Naive thymus-derived CD4-positive, alpha-beta T cell (primary cell): ENCODE measurements at regions of chr22 and their contacts with region 1.

Region 1: GRCh38 chr22:30326706-30327362 is at the start of gene TBC1D10A:
- DNase-seq: peak; percentile 87 to 93 (median 92)
- ATAC-seq: peak; percentile 97
- H3K4me3 ChIP-seq: peak within 1 kb of the TSS; percentile 83
- H3K4me3 Mint-ChIP-seq: peak within 1 kb of the TSS; percentile 87 to 96 (median 93)
- H3K27ac ChIP-seq: peak within 1 kb of the TSS; percentile 78
- H3K27ac Mint-ChIP-seq: peak within 1 kb of the TSS; percentile 82 to 94 (median 90)
- H3K4me1 ChIP-seq: peaks cover 43 to 49% of the 10 kb centered on the region in 2 donors
- H3K4me1 Mint-ChIP-seq: peaks cover 37 to 55% (median 48%) of the 10 kb centered on the region in 7 donors
- H3K27me3 ChIP-seq: no peaks in the 10 kb centered on the region
- H3K27me3 Mint-ChIP-seq: no peaks in the 10 kb centered on the region
- total RNA-seq, gene TBC1D10A: 47.2 to 73.8 (median 70.9) TPM

Region 2: GRCh38 chr22:30305519-30305905 is 21.3 kb before region 1 on chr22:
- CTCF ChIA-PET with region 1: interaction called, 8 read pairs
- POLR2A ChIA-PET with region 1: interaction called, 1,265 read pairs
- intact Hi-C with region 1: loop called (anchors 1 kb)
- DNase-seq: peak in 8 of 9 donors; percentile 56 to 75 (median 68)
- ATAC-seq: peak; percentile 67
- H3K4me3 ChIP-seq: peak overlapping the region; percentile 51
- H3K4me3 Mint-ChIP-seq: peak overlapping the region; percentile 69 to 97 (median 84)
- H3K27ac ChIP-seq: peak overlapping the region; percentile 75
- H3K27ac Mint-ChIP-seq: peak overlapping the region; percentile 87 to 99 (median 97)
- H3K4me1 ChIP-seq: peaks cover 96 to 98% of the 10 kb centered on the region in 2 donors
- H3K4me1 Mint-ChIP-seq: peaks cover 82 to 100% (median 93%) of the 10 kb centered on the region in 7 donors
- H3K27me3 ChIP-seq: no peaks in the 10 kb centered on the region
- H3K27me3 Mint-ChIP-seq: no peaks in the 10 kb centered on the region

Region 3: GRCh38 chr22:30314915-30315314 is 11.9 kb before region 1 on chr22:
- CTCF ChIA-PET with region 1: interaction called, 5 read pairs
- POLR2A ChIA-PET with region 1: interaction called, 1,265 read pairs
- intact Hi-C with region 1: loop called in 1 of 2 experiments (anchors 1 kb)
- DNase-seq: peak in 2 of 9 donors; percentile 40 to 56
- ATAC-seq: peak; percentile 64
- H3K4me3 ChIP-seq: no peak overlapping the region
- H3K4me3 Mint-ChIP-seq: peak overlapping the region in 9 of 10 donors; percentile 14 to 87 (median 49)
- H3K27ac ChIP-seq: peak overlapping the region; percentile 64
- H3K27ac Mint-ChIP-seq: peak overlapping the region; percentile 64 to 98 (median 90)
- H3K4me1 ChIP-seq: peaks cover 73 to 99% of the 10 kb centered on the region in 2 donors
- H3K4me1 Mint-ChIP-seq: peaks cover 90 to 100% (median 95%) of the 10 kb centered on the region in 7 donors
- H3K27me3 ChIP-seq: no peaks in the 10 kb centered on the region
- H3K27me3 Mint-ChIP-seq: no peaks in the 10 kb centered on the region

Region 4: GRCh38 chr22:30340911-30341685 is 14.3 kb after region 1 on chr22:
- CTCF ChIA-PET with region 1: no interaction called
- POLR2A ChIA-PET with region 1: interaction called, 10 read pairs
- intact Hi-C with region 1: loop called in 1 of 2 experiments (anchors 2 kb)
- DNase-seq: no peak
- ATAC-seq: no peak
- H3K4me3 ChIP-seq: no peak overlapping the region
- H3K4me3 Mint-ChIP-seq: no peak overlapping the region
- H3K27ac ChIP-seq: no peak overlapping the region
- H3K27ac Mint-ChIP-seq: peak overlapping the region in 3 of 9 donors; percentile 17 to 59 (median 59)
- H3K4me1 ChIP-seq: no peaks in the 10 kb centered on the region
- H3K4me1 Mint-ChIP-seq: peaks cover 0 to 21% (median 8%) of the 10 kb centered on the region in 7 donors
- H3K27me3 ChIP-seq: no peaks in the 10 kb centered on the region
- H3K27me3 Mint-ChIP-seq: no peaks in the 10 kb centered on the region

Region 5: GRCh38 chr22:30356449-30357235 is 29.8 kb after region 1 on chr22 and contains the starts of genes CCDC157 and SF3A1:
- CTCF ChIA-PET with region 1: interaction called, 3 read pairs
- POLR2A ChIA-PET with region 1: interaction called, 42 read pairs
- intact Hi-C with region 1: loop called (anchors 1 kb)
- DNase-seq: peak; percentile 78 to 90 (median 86)
- ATAC-seq: peak; percentile 94
- H3K4me3 ChIP-seq: peak within 1 kb of the TSS; percentile 94
- H3K4me3 Mint-ChIP-seq: peak within 1 kb of the TSS; percentile 92 to 99 (median 95)
- H3K27ac ChIP-seq: peak within 1 kb of the TSS; percentile 100
- H3K27ac Mint-ChIP-seq: peak within 1 kb of the TSS; percentile 86 to 99 (median 95)
- H3K4me1 ChIP-seq: peaks cover 32 to 37% of the 10 kb centered on the region in 2 donors
- H3K4me1 Mint-ChIP-seq: peaks cover 35 to 62% (median 54%) of the 10 kb centered on the region in 7 donors
- H3K27me3 ChIP-seq: no peaks in the 10 kb centered on the region
- H3K27me3 Mint-ChIP-seq: peaks cover 0 to 6% (median 0%) of the 10 kb centered on the region in 5 donors
- total RNA-seq, gene CCDC157: 1.8 to 6.9 (median 3.2) TPM
- total RNA-seq, gene SF3A1: 267 to 341 (median 284) TPM